ENCODE measurements at regions of chr5 and their contacts with region 1.

Region 1: DNA sequence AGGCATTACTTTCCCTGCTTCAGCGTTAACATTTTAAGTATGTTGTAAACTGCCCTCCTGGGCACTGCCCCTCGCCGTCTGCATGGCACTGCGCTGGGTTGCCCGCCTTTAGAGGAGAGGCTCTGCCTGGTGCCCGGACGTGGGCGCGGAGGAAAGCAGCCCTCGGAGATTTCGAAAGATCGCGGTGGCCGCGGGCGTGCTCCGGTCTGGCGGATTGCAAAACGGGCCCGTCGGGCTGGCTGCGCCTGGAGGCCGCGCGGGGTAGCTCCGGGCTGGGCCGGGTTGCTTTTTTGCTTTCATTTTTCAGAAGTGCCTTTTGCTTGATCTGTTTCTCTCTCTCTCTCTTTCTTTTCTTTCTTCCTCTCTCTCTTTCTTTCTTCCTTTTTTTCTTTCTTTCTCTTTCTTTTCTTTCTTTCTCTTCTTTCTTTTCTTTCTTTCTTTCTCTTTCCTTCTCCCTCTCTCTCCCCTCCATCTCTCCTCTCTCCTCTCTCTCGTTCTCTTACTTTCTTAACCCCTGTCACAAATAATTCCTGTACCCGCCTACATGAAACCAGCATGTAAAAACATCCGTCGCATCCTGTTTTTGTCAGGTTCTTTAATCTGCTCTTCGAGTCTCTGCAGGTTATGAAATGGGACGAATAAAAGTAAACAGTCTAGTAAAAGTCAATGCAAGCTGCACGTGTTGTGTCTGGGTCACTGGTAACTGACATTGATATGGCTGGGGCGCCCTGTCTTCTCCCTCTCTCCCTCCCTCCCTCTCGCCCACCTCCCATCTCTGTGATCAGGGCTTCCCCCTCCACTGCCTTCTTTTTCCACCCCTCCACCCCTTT is 1.7 kb downstream of the FST start:
- DNase-seq: peak; percentile 40
- ATAC-seq: peak; percentile 62
- H3K4me3 Mint-ChIP-seq: peak overlapping the region; percentile 84
- H3K27ac Mint-ChIP-seq: no peak overlapping the region
- H3K4me1 Mint-ChIP-seq: peaks cover 39% of the 10 kb centered on the region
- H3K27me3 Mint-ChIP-seq: peaks cover 44% of the 10 kb centered on the region
- CTCF ChIP-seq: peak; percentile 24

Region 2: GRCh38 chr5:53560506-53561191 is 78.5 kb after region 1 on chr5 and contains the start of gene NDUFS4:
- CTCF ChIA-PET with region 1: no interaction called
- POLR2A ChIA-PET with region 1: no interaction called
- intact Hi-C with region 1: loop called (anchors 2 kb)
- DNase-seq: peak; percentile 50
- ATAC-seq: peak; percentile 93
- H3K4me3 Mint-ChIP-seq: peak within 1 kb of the TSS; percentile 100
- H3K27ac Mint-ChIP-seq: peak within 1 kb of the TSS; percentile 94
- H3K4me1 Mint-ChIP-seq: peaks cover 37% of the 10 kb centered on the region
- H3K27me3 Mint-ChIP-seq: peaks cover 14% of the 10 kb centered on the region
- CTCF ChIP-seq: no peak
- total RNA-seq, gene NDUFS4: 35.6 and 40.9 TPM in 2 replicates

Region 3: GRCh38 chr5:53766673-53767072 is 284.6 kb after region 1 on chr5:
- CTCF ChIA-PET with region 1: no interaction called
- POLR2A ChIA-PET with region 1: no interaction called
- intact Hi-C with region 1: no loop called
- DNase-seq: no peak
- ATAC-seq: no peak
- H3K4me3 Mint-ChIP-seq: no peak overlapping the region
- H3K27ac Mint-ChIP-seq: no peak overlapping the region
- H3K4me1 Mint-ChIP-seq: no peaks in the 10 kb centered on the region
- H3K27me3 Mint-ChIP-seq: peaks cover 8% of the 10 kb centered on the region
- CTCF ChIP-seq: no peak

Region 4: DNA sequence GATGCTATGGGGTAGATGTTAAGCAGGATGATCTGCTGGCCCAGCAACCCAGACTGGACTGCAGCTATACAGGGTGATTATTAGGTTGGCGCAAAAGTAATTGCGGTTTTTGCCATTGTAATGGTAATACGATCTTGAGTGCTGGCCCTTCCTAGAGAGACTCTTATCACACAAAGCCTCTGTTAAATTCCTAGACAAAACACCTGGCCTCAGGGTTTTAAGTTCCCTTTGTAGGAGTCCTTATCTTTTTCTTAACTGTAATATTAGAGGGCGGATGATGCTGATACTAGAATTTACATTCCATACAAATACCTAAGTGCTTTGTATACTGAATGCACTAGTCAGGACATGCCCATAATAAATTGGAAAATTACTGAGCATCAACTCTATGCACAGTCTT is 300.5 kb after region 1 on chr5:
- CTCF ChIA-PET with region 1: no interaction called
- POLR2A ChIA-PET with region 1: interaction called, 11 read pairs
- intact Hi-C with region 1: no loop called
- DNase-seq: no peak
- ATAC-seq: no peak
- H3K4me3 Mint-ChIP-seq: no peak overlapping the region
- H3K27ac Mint-ChIP-seq: no peak overlapping the region
- H3K4me1 Mint-ChIP-seq: no peaks in the 10 kb centered on the region
- H3K27me3 Mint-ChIP-seq: no peaks in the 10 kb centered on the region
- CTCF ChIP-seq: no peak